ENCODE measurements at regions of chr13 and their contacts with region 1.

Region 1: GRCh38 chr13:84004108-84004507 is 121.8 kb upstream of the SLITRK1 start:
- DNase-seq: no peak
- H3K4me3 ChIP-seq: no peak overlapping the region
- H3K27ac ChIP-seq: no peak overlapping the region
- H3K4me1 ChIP-seq: no peaks in the 10 kb centered on the region
- H3K27me3 ChIP-seq: no peaks in the 10 kb centered on the region
- CTCF ChIP-seq: no peak

Region 2: GRCh38 chr13:84025824-84026223 is 21.7 kb after region 1 on chr13:
- CTCF ChIA-PET with region 1: no interaction called
- POLR2A ChIA-PET with region 1: interaction called, 11 read pairs
- intact Hi-C with region 1: no loop called
- DNase-seq: no peak
- H3K4me3 ChIP-seq: no peak overlapping the region
- H3K27ac ChIP-seq: no peak overlapping the region
- H3K4me1 ChIP-seq: no peaks in the 10 kb centered on the region
- H3K27me3 ChIP-seq: no peaks in the 10 kb centered on the region
- CTCF ChIP-seq: no peak

Measured in PC-9 (cell line).